Heart left ventricle (tissue), 16 donors: ENCODE measurements at regions of chr11 and their contacts with region 1.

Region 1: GRCh38 chr11:1572197-1573076 is at the start of gene DUSP8:
- DNase-seq: peak; percentile 94 to 96 (median 95)
- ATAC-seq: peak; percentile 75 to 80 (median 78)
- H3K4me3 ChIP-seq: peak within 1 kb of the TSS; percentile 55 to 85 (median 78)
- H3K27ac ChIP-seq: peak within 1 kb of the TSS; percentile 57 to 93 (median 84)
- H3K4me1 ChIP-seq: peaks cover 2 to 65% (median 33%) of the 10 kb centered on the region in 12 donors
- H3K27me3 ChIP-seq: peaks cover 0 to 25% (median 0%) of the 10 kb centered on the region in 9 donors
- CTCF ChIP-seq: no peak
- POLR2A ChIP-seq: peak in 1 of 2 donors; percentile 47
- total RNA-seq, gene DUSP8: 9.8 to 29.9 (median 17.1) TPM

Region 2: GRCh38 chr11:1262172-1263006 is 310.0 kb before region 1 on chr11:
- intact Hi-C with region 1: loop called in 1 of 10 experiments (anchors 2 kb)
- DNase-seq: peak; percentile 91 to 95 (median 93)
- ATAC-seq: peak; percentile 93 to 98 (median 95)
- H3K4me3 ChIP-seq: peak overlapping the region; percentile 12 to 69 (median 52)
- H3K27ac ChIP-seq: peak overlapping the region in 11 of 12 donors; percentile 65 to 83 (median 76)
- H3K4me1 ChIP-seq: peaks cover 0 to 18% (median 13%) of the 10 kb centered on the region in 12 donors
- H3K27me3 ChIP-seq: no peaks in the 10 kb centered on the region
- CTCF ChIP-seq: no peak
- POLR2A ChIP-seq: peak in 1 of 2 donors; percentile 53

Region 3: DNA sequence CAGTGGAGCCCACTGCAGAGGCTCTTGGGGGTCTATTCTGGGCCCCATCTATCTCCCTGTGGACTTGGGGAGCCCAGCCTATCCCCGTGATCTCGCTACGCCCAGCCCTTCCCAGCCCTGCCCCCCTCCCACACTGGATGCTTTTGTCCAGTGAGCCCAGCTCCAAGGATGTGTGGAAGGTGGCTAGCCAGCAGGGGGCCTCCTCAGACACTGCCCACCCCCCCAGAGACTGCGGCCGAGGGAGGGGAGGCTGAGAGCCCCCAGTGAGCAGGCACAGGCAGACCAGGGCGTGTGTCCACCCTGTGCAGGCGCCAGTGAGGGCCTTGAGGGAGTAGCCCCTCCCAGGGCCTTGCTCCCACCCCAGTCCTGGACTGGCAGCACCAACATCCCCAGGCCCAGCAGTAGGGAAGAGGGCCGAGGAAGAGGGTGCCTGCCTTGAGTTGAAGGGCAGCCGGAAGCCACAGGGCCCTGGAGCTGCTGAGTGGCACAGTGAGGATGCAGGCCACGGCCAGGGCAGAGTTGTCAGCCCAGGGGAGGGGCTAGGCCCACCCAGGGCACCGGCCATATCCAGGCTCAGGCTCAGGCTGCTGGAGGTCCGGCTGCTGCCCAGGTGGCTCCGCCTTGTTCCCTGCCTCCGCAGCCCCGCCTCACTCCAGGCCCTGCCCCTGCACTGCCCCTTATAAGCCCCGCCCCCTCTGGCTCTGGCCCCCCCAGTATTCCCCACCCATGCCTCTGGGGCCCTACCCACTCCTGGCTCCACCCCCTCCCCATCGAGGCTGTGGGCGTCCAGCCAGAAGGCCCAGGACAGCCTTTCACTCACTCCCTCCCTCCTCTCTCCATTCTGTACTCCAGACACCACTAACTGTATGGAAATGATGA is 113.9 kb before region 1 on chr11:
- intact Hi-C with region 1: loop called in 2 of 10 experiments (anchors 10 kb)
- DNase-seq: peak in 4 of 5 donors; percentile 45 to 63 (median 53)
- ATAC-seq: peak; percentile 26 to 49 (median 40)
- H3K4me3 ChIP-seq: peak overlapping the region in 1 of 12 donors; percentile 14
- H3K27ac ChIP-seq: peak overlapping the region in 3 of 12 donors; percentile 5 to 93 (median 50)
- H3K4me1 ChIP-seq: peaks cover 0 to 18% (median 3%) of the 10 kb centered on the region in 12 donors
- H3K27me3 ChIP-seq: no peaks in the 10 kb centered on the region
- CTCF ChIP-seq: peak in 8 of 12 donors; percentile 5 to 43 (median 20)
- POLR2A ChIP-seq: no peak

Region 4: DNA sequence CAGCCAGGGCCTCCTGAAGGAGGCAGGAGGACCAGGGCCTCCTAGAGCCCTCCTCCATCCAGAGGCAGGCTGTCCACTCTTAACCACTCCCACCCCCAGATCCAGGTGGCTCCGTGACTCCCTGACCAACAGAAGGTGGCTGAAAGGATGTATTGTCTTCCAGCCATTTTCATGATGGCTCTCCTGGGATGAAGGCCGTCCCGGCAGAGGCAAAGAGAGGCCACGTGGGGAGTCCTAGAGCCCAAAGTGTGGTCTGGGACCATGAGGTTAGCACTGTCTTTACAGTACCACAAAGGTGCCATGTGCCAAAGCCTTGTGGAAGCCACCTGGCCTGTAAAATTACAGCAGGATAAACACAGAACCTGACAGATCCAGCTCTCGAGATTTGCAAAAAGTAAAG is 42.7 kb before region 1 on chr11:
- intact Hi-C with region 1: no loop called
- DNase-seq: peak in 1 of 5 donors; percentile 4
- ATAC-seq: no peak
- H3K4me3 ChIP-seq: no peak overlapping the region
- H3K27ac ChIP-seq: peak overlapping the region in 1 of 12 donors; percentile 13
- H3K4me1 ChIP-seq: peaks cover 21 to 98% (median 69%) of the 10 kb centered on the region in 12 donors
- H3K27me3 ChIP-seq: no peaks in the 10 kb centered on the region
- CTCF ChIP-seq: no peak
- POLR2A ChIP-seq: no peak

Region 5: DNA sequence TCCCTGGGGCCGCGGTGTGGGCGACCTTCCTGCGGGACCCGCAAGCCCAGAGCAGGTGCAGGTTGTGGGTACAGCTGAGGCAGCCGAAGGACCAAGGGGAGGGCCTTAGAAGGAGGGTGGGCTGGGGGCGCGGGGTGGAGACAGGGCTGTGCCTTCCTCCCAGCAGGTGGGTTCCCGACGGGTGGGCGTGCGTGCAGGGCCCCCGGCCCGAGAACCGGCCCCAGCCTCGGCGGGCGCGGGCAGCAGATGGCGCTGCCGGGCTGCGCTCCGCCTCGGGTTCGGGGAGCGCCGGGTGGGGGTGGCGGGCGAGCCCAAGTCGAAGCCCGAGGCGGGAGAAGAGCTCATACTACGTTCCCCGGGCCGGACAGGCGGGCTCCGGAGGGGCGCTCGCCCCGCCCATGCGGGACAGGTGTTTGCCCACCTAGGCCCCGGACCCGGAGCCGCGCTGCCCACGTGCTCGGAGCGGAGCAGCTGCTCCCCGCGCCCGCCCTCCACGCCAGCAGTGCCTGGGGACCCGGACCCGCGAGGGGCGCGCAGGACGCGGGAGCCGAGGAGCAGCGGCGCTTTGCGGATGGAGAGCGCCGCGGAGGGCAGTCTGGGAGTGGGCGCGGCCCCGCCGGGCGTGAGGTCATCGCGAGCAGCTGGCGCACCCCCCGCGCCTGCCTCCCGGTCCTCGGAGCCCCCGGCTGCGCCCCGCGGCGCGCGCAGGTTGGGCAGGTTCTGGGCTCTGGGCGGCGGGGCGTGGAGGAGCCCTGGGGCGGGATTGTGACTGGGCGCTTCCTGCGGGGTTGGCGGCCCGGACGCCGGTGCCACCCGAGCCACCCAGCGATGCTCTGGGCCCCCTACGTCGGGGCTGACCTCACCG is 25.7 kb before region 1 on chr11:
- intact Hi-C with region 1: loop called (anchors 1 to 2 kb)
- DNase-seq: peak; percentile 54 to 71 (median 60)
- ATAC-seq: peak in 3 of 4 donors; percentile 29 to 69 (median 57)
- H3K4me3 ChIP-seq: peak overlapping the region; percentile 34 to 63 (median 52)
- H3K27ac ChIP-seq: peak overlapping the region in 11 of 12 donors; percentile 72 to 95 (median 85)
- H3K4me1 ChIP-seq: peaks cover 5 to 32% (median 19%) of the 10 kb centered on the region in 12 donors
- H3K27me3 ChIP-seq: peaks cover 0 to 35% (median 9%) of the 10 kb centered on the region in 9 donors
- CTCF ChIP-seq: peak; percentile 57 to 93 (median 81)
- POLR2A ChIP-seq: no peak

Region 6: DNA sequence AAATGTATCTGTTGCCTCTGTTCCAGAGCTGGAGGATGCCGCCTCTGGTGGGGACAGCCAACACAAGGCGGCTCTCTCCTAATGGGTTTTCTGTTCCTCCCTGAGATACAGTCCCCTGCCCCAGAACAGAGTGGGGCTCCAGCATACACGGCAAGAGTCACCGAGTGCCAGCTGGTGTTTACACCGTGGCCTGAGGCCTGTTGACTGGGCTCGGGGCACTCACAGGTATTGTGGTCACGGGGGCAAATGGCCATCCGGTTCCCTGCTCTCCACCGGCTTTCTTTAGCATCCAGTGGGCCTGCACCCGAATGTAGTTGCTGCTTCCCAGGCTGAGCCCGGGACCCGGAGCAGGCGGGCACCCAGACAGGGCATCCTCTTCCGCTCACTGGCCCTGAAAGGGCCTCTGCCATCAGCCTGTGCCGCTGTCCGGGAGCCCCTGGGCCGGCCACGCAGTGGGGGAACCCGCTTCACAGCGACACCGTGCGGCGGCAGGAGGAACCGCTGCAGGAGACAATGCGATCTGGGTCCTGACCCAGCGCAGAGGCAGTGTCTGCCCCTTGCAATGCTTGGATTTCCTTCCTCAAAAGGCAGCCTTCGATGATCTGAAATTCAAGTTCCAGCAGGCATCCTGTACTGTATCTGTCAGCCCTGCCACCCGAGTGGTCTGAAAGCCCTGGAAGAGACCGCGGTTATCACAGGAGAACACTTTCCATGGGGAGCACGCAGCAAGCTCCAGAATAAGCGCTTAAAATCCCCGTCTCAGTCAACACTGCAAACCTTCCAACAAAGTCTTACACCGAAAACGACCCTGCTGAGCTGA is 56.3 kb after region 1 on chr11:
- intact Hi-C with region 1: loop called in 1 of 10 experiments (anchors 5 kb)
- DNase-seq: peak; percentile 49 to 82 (median 60)
- ATAC-seq: peak; percentile 57 to 89 (median 84)
- H3K4me3 ChIP-seq: no peak overlapping the region
- H3K27ac ChIP-seq: no peak overlapping the region
- H3K4me1 ChIP-seq: peaks cover 0 to 8% (median 3%) of the 10 kb centered on the region in 12 donors
- H3K27me3 ChIP-seq: peaks cover 0 to 49% (median 12%) of the 10 kb centered on the region in 9 donors
- CTCF ChIP-seq: peak; percentile 79 to 98 (median 89)
- POLR2A ChIP-seq: no peak